ENCODE measurements at regions of chr2 and their contacts with region 1.

Region 1: GRCh38 chr2:173914055-173914934 is 50.9 kb downstream of the SP3 start:
- DNase-seq: no peak
- ATAC-seq: no peak
- H3K4me3 ChIP-seq: no peak overlapping the region
- H3K4me3 Mint-ChIP-seq: no peak overlapping the region
- H3K27ac ChIP-seq: no peak overlapping the region
- H3K27ac Mint-ChIP-seq: peak overlapping the region; percentile 26 to 80
- H3K4me1 ChIP-seq: peaks cover 0 to 10% of the 10 kb centered on the region in 2 experiments
- H3K4me1 Mint-ChIP-seq: peaks cover 38 to 47% (median 38%) of the 10 kb centered on the region in 3 donors
- H3K27me3 ChIP-seq: no peaks in the 10 kb centered on the region
- H3K27me3 Mint-ChIP-seq: no peaks in the 10 kb centered on the region

Region 2: DNA sequence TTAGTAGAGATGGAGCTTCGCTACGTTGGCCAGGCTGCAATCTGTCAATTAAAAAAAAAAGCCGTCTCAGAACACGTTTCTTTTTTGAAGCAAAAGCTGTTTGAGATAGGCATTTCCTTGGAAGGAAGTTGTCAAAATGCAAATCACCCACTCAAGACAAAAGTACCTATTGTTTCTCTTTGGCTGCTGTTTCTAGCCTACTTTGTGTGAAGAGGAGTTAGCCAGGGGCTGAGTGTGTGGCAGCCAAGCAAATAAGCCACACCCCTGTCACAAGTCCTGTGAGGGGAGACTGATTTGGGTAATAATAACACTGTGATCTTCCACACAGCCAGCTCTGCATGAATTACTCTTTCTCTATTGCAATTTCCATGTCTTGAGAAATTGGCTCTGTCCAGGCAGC is 607.0 kb before region 1 on chr2:
- CTCF ChIA-PET with region 1: no interaction called
- POLR2A ChIA-PET with region 1: no interaction called
- DNase-seq: no peak
- ATAC-seq: no peak
- H3K4me3 ChIP-seq: no peak overlapping the region
- H3K4me3 Mint-ChIP-seq: no peak overlapping the region
- H3K27ac ChIP-seq: no peak overlapping the region
- H3K27ac Mint-ChIP-seq: no peak overlapping the region
- H3K4me1 ChIP-seq: no peaks in the 10 kb centered on the region
- H3K4me1 Mint-ChIP-seq: no peaks in the 10 kb centered on the region
- H3K27me3 ChIP-seq: no peaks in the 10 kb centered on the region
- H3K27me3 Mint-ChIP-seq: peaks cover 0 to 3% of the 10 kb centered on the region in 2 donors

Region 3: GRCh38 chr2:173590271-173590861 is 323.9 kb before region 1 on chr2:
- CTCF ChIA-PET with region 1: no interaction called
- POLR2A ChIA-PET with region 1: no interaction called
- DNase-seq: no peak
- ATAC-seq: no peak
- H3K4me3 ChIP-seq: no peak overlapping the region
- H3K4me3 Mint-ChIP-seq: no peak overlapping the region
- H3K27ac ChIP-seq: no peak overlapping the region
- H3K27ac Mint-ChIP-seq: no peak overlapping the region
- H3K4me1 ChIP-seq: no peaks in the 10 kb centered on the region
- H3K4me1 Mint-ChIP-seq: no peaks in the 10 kb centered on the region
- H3K27me3 ChIP-seq: peaks cover 0 to 3% of the 10 kb centered on the region in 2 experiments
- H3K27me3 Mint-ChIP-seq: peaks cover 15 to 19% of the 10 kb centered on the region in 2 donors

Region 4: GRCh38 chr2:173990970-173991819 is 76.9 kb after region 1 on chr2:
- CTCF ChIA-PET with region 1: no interaction called
- POLR2A ChIA-PET with region 1: interaction called in 1 of 2 experiments, 10 read pairs
- DNase-seq: no peak
- ATAC-seq: no peak
- H3K4me3 ChIP-seq: no peak overlapping the region
- H3K4me3 Mint-ChIP-seq: no peak overlapping the region
- H3K27ac ChIP-seq: no peak overlapping the region
- H3K27ac Mint-ChIP-seq: no peak overlapping the region
- H3K4me1 ChIP-seq: no peaks in the 10 kb centered on the region
- H3K4me1 Mint-ChIP-seq: peaks cover 0 to 6% (median under 1%) of the 10 kb centered on the region in 3 donors
- H3K27me3 ChIP-seq: peaks cover 0 to 4% of the 10 kb centered on the region in 2 experiments
- H3K27me3 Mint-ChIP-seq: peaks cover 8 to 9% of the 10 kb centered on the region in 2 donors